ENCODE measurements at regions of chr12 and their contacts with region 1.

Region 1: GRCh38 chr12:4276524-4277204 is 3.1 kb downstream of the CCND2 start:
- DNase-seq: peak; percentile 81
- H3K4me3 ChIP-seq: no peak overlapping the region
- H3K27ac ChIP-seq: no peak overlapping the region
- H3K4me1 ChIP-seq: no peaks in the 10 kb centered on the region
- CTCF ChIP-seq: peak; percentile 88

Region 2: DNA sequence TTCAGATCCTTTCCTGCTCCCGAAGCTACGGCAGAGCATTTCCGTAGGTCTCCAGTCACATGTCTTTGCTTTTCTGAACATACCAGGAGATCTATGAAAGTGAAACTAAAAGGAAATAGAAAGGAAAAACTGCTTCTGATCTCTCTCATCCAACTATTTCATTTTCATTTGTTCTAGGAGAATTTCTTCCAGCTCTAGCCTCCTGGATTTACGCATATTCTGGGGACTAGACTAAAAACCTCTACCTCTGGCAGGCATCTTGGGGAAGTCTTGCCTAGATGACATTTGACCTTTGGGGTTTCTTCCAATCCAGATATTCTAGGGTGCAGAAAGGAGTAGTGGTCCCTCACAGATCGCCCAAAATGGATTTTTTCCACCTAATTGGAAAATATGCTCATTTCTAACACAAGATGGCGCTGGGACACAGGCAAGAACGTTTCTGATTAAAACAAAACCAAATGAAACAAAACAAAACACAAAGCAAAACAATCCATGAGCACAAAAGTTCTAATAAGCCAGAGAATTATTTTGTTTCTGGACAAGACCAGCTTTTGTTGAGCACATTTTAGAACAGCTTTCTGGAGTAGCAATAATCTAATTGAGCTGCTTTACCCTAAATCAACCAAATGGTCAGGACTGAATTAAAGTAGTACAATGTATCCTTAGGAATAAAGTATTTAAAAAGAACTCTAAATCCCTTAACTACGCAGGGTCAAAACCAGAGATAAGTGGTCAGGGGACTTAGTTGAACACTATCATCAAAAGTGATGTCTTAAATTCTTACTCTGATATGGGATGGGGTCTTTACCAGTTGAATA is 391.2 kb before region 1 on chr12:
- CTCF ChIA-PET with region 1: interaction called, 5 read pairs
- POLR2A ChIA-PET with region 1: interaction called, 4 read pairs
- intact Hi-C with region 1: loop called (anchors 1 kb)
- DNase-seq: peak; percentile 47
- H3K4me3 ChIP-seq: no peak overlapping the region
- H3K27ac ChIP-seq: no peak overlapping the region
- H3K4me1 ChIP-seq: no peaks in the 10 kb centered on the region
- CTCF ChIP-seq: peak; percentile 96

Region 3: GRCh38 chr12:3995306-3995705 is 281.4 kb before region 1 on chr12:
- CTCF ChIA-PET with region 1: no interaction called
- POLR2A ChIA-PET with region 1: no interaction called
- intact Hi-C with region 1: loop called (anchors 2 kb)
- DNase-seq: no peak
- H3K4me3 ChIP-seq: no peak overlapping the region
- H3K27ac ChIP-seq: no peak overlapping the region
- H3K4me1 ChIP-seq: no peaks in the 10 kb centered on the region
- CTCF ChIP-seq: no peak

Region 4: DNA sequence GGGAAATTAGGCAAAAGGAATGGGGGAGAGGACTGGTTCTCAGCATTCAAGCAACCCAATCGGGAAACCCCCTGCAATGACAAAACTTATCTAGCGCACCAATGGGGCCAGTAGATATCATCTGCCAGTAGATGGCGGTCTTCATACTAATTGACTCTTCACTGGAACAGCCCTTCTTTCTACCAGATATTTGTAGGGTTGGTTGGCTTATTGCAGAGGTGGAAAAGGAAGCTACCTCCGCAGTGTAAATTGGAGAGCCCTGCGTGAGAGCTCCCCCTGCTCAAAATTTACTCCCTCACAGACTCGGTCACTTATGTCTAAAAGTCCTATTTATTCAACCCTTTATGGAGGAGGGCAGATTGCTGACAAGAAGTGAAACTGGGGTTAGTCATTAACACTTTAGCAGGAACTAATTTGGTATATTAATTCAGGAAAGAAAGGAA is 169.2 kb before region 1 on chr12:
- CTCF ChIA-PET with region 1: interaction called, 5 read pairs
- POLR2A ChIA-PET with region 1: no interaction called
- intact Hi-C with region 1: loop called (anchors 1 kb)
- DNase-seq: peak; percentile 67
- H3K4me3 ChIP-seq: no peak overlapping the region
- H3K27ac ChIP-seq: no peak overlapping the region
- H3K4me1 ChIP-seq: no peaks in the 10 kb centered on the region
- CTCF ChIP-seq: peak; percentile 86

Region 5: GRCh38 chr12:4366090-4366489 is 89.4 kb after region 1 on chr12:
- CTCF ChIA-PET with region 1: no interaction called
- POLR2A ChIA-PET with region 1: no interaction called
- intact Hi-C with region 1: no loop called
- DNase-seq: no peak
- H3K4me3 ChIP-seq: no peak overlapping the region
- H3K27ac ChIP-seq: no peak overlapping the region
- H3K4me1 ChIP-seq: no peaks in the 10 kb centered on the region
- CTCF ChIP-seq: no peak